IMR-90 (cell line): ENCODE measurements at regions of chr10 and their contacts with region 1.

Region 1: GRCh38 chr10:27108165-27108564 is 7.9 kb upstream of the ANKRD26 start:
- DNase-seq: no peak
- ATAC-seq: no peak
- H3K4me3 ChIP-seq: no peak overlapping the region
- H3K27ac ChIP-seq: no peak overlapping the region
- H3K4me1 ChIP-seq: no peaks in the 10 kb centered on the region
- H3K27me3 ChIP-seq: no peaks in the 10 kb centered on the region
- CTCF ChIP-seq: no peak
- POLR2A ChIP-seq: no peak
- RAD21 ChIP-seq: no peak

Region 2: GRCh38 chr10:27138277-27138676 is 30.1 kb after region 1 on chr10:
- CTCF ChIA-PET with region 1: no interaction called
- POLR2A ChIA-PET with region 1: no interaction called
- dilution Hi-C with region 1: no loop called
- in situ Hi-C with region 1: no loop called
- intact Hi-C with region 1: loop called (anchors 2 kb)
- DNase-seq: no peak
- ATAC-seq: no peak
- H3K4me3 ChIP-seq: no peak overlapping the region
- H3K27ac ChIP-seq: no peak overlapping the region
- H3K4me1 ChIP-seq: no peaks in the 10 kb centered on the region
- H3K27me3 ChIP-seq: no peaks in the 10 kb centered on the region
- CTCF ChIP-seq: no peak
- POLR2A ChIP-seq: no peak
- RAD21 ChIP-seq: no peak

Region 3: GRCh38 chr10:27169849-27170248 is 61.7 kb after region 1 on chr10:
- CTCF ChIA-PET with region 1: no interaction called
- POLR2A ChIA-PET with region 1: no interaction called
- dilution Hi-C with region 1: no loop called
- in situ Hi-C with region 1: no loop called
- intact Hi-C with region 1: loop called (anchors 10 kb)
- DNase-seq: no peak
- ATAC-seq: no peak
- H3K4me3 ChIP-seq: no peak overlapping the region
- H3K27ac ChIP-seq: no peak overlapping the region
- H3K4me1 ChIP-seq: no peaks in the 10 kb centered on the region
- H3K27me3 ChIP-seq: no peaks in the 10 kb centered on the region
- CTCF ChIP-seq: no peak
- POLR2A ChIP-seq: no peak
- RAD21 ChIP-seq: no peak